Activated CD4-positive, alpha-beta T cell treated with anti-CD3 and anti-CD28 coated beads for 36 hours (primary cell): ENCODE measurements at regions of chr2 and their contacts with region 1.

Region 1: DNA sequence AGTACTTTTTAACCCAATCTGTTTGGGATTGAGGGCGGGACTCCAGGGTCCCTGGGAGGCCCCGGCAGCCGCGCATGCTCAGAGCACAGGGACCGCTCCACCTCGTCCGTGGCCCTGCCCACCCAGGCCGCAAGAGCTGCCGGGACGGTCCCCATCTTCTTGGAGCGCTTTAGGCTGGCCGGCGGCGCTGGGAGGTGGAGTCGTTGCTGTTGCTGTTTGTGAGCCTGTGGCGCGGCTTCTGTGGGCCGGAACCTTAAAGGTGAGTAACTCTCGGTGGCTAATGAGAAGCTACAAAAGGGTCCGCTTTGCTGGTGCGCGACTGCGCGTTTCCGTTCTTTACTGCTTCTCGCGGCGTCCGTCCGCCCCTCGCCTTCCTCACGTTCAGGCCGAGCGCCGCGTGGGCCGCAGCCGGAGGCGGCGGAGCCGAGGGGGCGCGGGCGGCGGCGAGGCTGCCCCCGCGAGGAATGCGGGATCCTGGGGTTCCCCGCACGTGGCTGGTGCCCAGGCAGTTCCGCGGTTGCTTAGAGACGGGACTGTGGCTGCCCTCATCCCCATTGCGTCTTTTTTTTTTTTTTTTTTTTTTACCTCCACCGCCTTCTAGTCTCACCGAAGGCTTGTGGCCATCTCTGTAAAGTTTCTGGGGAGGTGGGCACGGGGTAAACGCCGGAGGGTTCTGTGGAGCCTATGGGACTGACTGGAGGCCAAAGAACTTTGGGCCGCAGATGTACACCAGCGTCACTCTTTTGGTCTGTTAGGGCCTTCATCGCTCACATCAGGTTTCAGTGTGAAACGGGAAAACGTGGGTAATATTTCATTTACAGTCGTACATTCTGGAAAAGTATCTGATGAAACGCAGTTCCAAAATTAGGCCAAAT is at the start of gene SSB:
- DNase-seq: peak; percentile 98
- ATAC-seq: peak; percentile 98
- H3K4me3 Mint-ChIP-seq: peak within 1 kb of the TSS; percentile 93
- H3K27ac Mint-ChIP-seq: peak within 1 kb of the TSS; percentile 91
- H3K4me1 Mint-ChIP-seq: peaks cover 22% of the 10 kb centered on the region
- H3K27me3 Mint-ChIP-seq: no peaks in the 10 kb centered on the region
- total RNA-seq, gene SSB: 127 to 138 TPM

Region 2: GRCh38 chr2:169573160-169573973 is 225.6 kb before region 1 on chr2 and contains the start of gene FASTKD1:
- CTCF ChIA-PET with region 1: no interaction called
- POLR2A ChIA-PET with region 1: no interaction called
- intact Hi-C with region 1: loop called in 1 of 2 experiments (anchors 1 kb)
- DNase-seq: peak; percentile 94
- ATAC-seq: peak; percentile 100
- H3K4me3 Mint-ChIP-seq: peak within 1 kb of the TSS; percentile 97
- H3K27ac Mint-ChIP-seq: peak within 1 kb of the TSS; percentile 92
- H3K4me1 Mint-ChIP-seq: peaks cover 20% of the 10 kb centered on the region
- H3K27me3 Mint-ChIP-seq: no peaks in the 10 kb centered on the region
- total RNA-seq, gene FASTKD1: 29.8 to 39.7 TPM

Region 3: GRCh38 chr2:169734169-169734847 is 64.6 kb before region 1 on chr2:
- CTCF ChIA-PET with region 1: no interaction called
- POLR2A ChIA-PET with region 1: no interaction called
- intact Hi-C with region 1: loop called in 1 of 2 experiments (anchors 5 kb)
- DNase-seq: peak; percentile 42
- ATAC-seq: peak; percentile 51
- H3K4me3 Mint-ChIP-seq: peak overlapping the region; percentile 78
- H3K27ac Mint-ChIP-seq: no peak overlapping the region
- H3K4me1 Mint-ChIP-seq: peaks cover 4% of the 10 kb centered on the region
- H3K27me3 Mint-ChIP-seq: peaks cover 31% of the 10 kb centered on the region

Region 4: GRCh38 chr2:169815849-169816248 is 16.9 kb after region 1 on chr2:
- CTCF ChIA-PET with region 1: interaction called, 17 read pairs
- POLR2A ChIA-PET with region 1: interaction called, 3 read pairs
- intact Hi-C with region 1: no loop called
- DNase-seq: no peak
- ATAC-seq: peak; percentile 74
- H3K4me3 Mint-ChIP-seq: no peak overlapping the region
- H3K27ac Mint-ChIP-seq: no peak overlapping the region
- H3K4me1 Mint-ChIP-seq: peaks cover 18% of the 10 kb centered on the region
- H3K27me3 Mint-ChIP-seq: no peaks in the 10 kb centered on the region

Region 5: GRCh38 chr2:169983506-169983905 is 184.6 kb after region 1 on chr2:
- CTCF ChIA-PET with region 1: no interaction called
- POLR2A ChIA-PET with region 1: no interaction called
- intact Hi-C with region 1: no loop called
- DNase-seq: no peak
- ATAC-seq: no peak
- H3K4me3 Mint-ChIP-seq: no peak overlapping the region
- H3K27ac Mint-ChIP-seq: no peak overlapping the region
- H3K4me1 Mint-ChIP-seq: peaks cover 12% of the 10 kb centered on the region
- H3K27me3 Mint-ChIP-seq: no peaks in the 10 kb centered on the region